MCF 10A (cell line): ENCODE measurements at regions of chr7 and their contacts with region 1.

Region 1: DNA sequence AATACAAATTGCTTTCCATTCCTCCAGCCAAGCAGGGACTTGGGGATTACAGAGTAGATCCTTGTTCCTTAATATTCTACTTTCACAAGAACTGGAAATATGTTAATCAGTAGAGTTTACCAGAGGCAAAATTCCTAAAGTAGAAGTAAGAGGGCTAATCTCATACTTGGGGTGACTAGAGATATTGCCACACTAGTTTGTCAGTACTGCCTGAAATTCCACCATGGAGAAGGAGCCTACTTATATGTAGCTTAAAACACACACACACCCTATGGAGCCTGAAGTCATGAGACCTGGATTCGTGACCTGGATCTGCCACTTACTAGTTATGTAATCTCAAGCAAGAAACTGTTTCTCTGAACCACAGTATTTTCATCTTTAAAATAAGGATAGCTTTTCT is 33.9 kb downstream of the STRIP2 start:
- DNase-seq: no peak
- H3K4me3 Mint-ChIP-seq: no peak overlapping the region
- H3K27ac Mint-ChIP-seq: no peak overlapping the region
- H3K4me1 Mint-ChIP-seq: no peaks in the 10 kb centered on the region
- H3K27me3 Mint-ChIP-seq: no peaks in the 10 kb centered on the region
- CTCF ChIP-seq: no peak

Region 2: GRCh38 chr7:129298268-129298893 is 169.7 kb before region 1 on chr7:
- CTCF ChIA-PET with region 1: interaction called, 11 read pairs
- POLR2A ChIA-PET with region 1: no interaction called
- intact Hi-C with region 1: no loop called
- DNase-seq: peak; percentile 64
- H3K4me3 Mint-ChIP-seq: no peak overlapping the region
- H3K27ac Mint-ChIP-seq: no peak overlapping the region
- H3K4me1 Mint-ChIP-seq: peaks cover 6% of the 10 kb centered on the region
- H3K27me3 Mint-ChIP-seq: no peaks in the 10 kb centered on the region
- CTCF ChIP-seq: peak; percentile 67

Region 3: DNA sequence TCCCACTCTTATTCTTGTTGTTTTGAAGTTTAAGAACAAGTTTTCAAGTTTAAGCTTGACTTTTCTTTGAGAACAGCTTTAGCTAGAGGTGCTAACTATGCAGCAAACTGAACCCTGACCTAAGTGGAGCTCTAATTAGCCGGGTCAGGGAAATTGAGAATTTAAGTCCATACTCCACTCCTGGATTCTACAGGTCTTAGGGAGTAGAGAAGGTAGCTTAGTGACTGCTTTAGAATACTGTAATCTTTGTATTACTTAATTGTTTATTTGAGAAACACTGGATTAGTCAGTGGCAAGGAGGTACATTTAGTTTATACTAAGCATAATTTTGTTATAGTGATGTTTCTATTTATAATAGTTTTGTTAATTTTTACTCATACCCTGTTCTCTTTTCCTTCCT is 108.4 kb before region 1 on chr7:
- CTCF ChIA-PET with region 1: interaction called, 11 read pairs
- POLR2A ChIA-PET with region 1: no interaction called
- intact Hi-C with region 1: no loop called
- DNase-seq: no peak
- H3K4me3 Mint-ChIP-seq: no peak overlapping the region
- H3K27ac Mint-ChIP-seq: no peak overlapping the region
- H3K4me1 Mint-ChIP-seq: no peaks in the 10 kb centered on the region
- H3K27me3 Mint-ChIP-seq: no peaks in the 10 kb centered on the region
- CTCF ChIP-seq: no peak

Region 4: DNA sequence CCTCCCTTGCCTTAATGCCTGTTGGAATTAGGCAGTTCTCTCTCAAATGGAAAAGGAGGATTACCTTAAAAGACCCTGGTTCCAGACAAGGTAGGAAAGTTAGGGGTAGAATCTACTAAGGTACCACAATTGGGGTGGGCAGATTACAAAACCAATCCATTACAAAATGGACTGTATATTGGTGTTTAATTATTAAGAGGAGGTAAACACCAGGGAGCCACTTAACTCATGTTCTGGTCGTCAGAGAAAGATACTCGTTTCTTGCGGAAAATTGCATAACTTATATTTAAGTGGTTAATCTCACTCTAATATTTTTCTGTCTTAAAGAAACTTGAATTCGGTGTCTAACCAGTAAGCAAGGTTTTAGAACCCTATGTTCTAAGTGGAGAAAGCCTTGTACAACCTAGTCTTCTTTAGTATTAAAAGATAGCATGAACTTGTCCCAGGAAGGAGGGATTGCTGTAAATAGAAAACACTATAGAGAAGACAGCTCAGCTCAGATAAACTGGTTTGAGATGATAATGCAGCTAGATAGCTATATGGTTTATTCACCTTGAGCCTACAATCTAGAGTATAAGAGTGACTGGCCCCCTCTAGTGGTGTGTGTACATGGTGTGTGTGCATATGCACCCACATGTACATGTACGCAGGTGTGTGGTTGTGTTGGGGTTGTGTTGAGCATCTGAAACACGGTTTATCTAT is 91.9 kb before region 1 on chr7:
- CTCF ChIA-PET with region 1: interaction called, 179 read pairs
- POLR2A ChIA-PET with region 1: no interaction called
- intact Hi-C with region 1: no loop called
- DNase-seq: peak; percentile 64
- H3K4me3 Mint-ChIP-seq: no peak overlapping the region
- H3K27ac Mint-ChIP-seq: no peak overlapping the region
- H3K4me1 Mint-ChIP-seq: no peaks in the 10 kb centered on the region
- H3K27me3 Mint-ChIP-seq: no peaks in the 10 kb centered on the region
- CTCF ChIP-seq: peak; percentile 49

Region 5: DNA sequence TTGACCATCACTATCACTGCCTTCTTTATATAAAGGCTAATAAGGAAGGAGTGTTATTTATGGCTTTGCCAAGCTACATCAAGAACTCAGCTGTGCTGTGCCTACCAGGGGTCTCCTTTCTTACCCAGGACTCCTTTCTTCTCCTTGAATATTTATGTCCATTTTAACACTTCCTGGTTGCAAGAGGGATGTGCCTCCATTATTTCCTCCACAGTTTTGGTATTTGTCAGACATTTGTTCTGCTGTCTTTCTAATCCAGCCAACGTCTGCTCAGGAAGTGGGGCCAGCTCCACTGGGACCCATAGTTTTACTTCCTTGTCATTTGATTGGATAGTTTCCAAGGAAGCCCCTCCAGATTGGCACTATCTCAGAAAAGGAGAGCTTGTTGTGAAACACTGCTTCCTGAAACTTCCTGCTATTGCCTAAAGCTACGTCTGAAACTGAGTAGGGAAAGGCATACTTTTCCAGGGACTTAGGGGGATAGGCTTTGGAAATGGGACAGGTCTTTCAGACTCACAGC is 40.5 kb before region 1 on chr7:
- CTCF ChIA-PET with region 1: no interaction called
- POLR2A ChIA-PET with region 1: no interaction called
- intact Hi-C with region 1: no loop called
- DNase-seq: no peak
- H3K4me3 Mint-ChIP-seq: no peak overlapping the region
- H3K27ac Mint-ChIP-seq: no peak overlapping the region
- H3K4me1 Mint-ChIP-seq: peaks cover 11% of the 10 kb centered on the region
- H3K27me3 Mint-ChIP-seq: no peaks in the 10 kb centered on the region
- CTCF ChIP-seq: no peak

Region 6: DNA sequence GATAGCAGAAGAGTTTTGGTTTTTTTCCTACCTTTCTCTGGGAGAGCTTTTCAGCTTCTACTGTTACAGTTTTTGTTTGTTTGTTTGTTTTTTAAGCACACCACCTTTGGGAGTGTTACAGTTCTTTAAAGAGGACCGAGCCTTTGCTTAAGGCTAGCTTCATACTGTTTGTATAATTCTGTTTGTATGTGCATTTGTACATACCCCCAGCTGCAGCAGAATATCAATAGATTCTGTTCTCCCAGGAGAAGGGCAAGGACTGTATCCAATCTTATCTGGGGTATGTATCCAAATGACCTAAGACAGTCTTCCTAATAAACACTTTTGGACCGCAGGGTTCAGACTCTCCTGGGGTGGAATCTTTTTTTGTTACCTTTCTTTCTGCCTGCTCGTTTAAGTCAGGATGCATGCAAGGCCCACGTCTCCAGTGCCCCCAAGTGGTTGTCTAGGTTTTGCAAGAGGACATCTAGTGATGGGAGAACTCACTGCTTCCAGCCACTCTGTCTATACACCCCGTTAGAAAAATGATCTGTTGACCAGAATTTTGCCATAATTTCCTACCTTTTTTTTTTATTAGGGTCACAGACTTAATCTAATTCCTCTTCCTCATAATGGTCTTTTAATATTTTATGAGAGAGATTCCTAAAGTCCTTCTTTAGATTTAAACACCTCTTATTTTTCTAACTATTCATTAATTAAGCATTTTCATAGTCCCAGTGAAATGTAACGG is 167.4 kb after region 1 on chr7:
- CTCF ChIA-PET with region 1: interaction called, 7 read pairs
- POLR2A ChIA-PET with region 1: no interaction called
- intact Hi-C with region 1: loop called (anchors 2 kb)
- DNase-seq: peak; percentile 80
- H3K4me3 Mint-ChIP-seq: no peak overlapping the region
- H3K27ac Mint-ChIP-seq: no peak overlapping the region
- H3K4me1 Mint-ChIP-seq: peaks cover 12% of the 10 kb centered on the region
- H3K27me3 Mint-ChIP-seq: no peaks in the 10 kb centered on the region
- CTCF ChIP-seq: peak; percentile 64